HCT116 (cell line): ENCODE measurements at regions of chr1 and their contacts with region 1.

Region 1: GRCh38 chr1:147591261-147591891 is 50.1 kb downstream of the BCL9 start:
- DNase-seq: no peak
- ATAC-seq: no peak
- H3K4me3 ChIP-seq: no peak overlapping the region
- H3K27ac ChIP-seq: no peak overlapping the region
- H3K4me1 ChIP-seq: no peaks in the 10 kb centered on the region
- H3K27me3 ChIP-seq: no peaks in the 10 kb centered on the region; the same call in 1 of the 2 replicates
- CTCF ChIP-seq: no peak
- POLR2A ChIP-seq: no peak
- RAD21 ChIP-seq: no peak

Region 2: DNA sequence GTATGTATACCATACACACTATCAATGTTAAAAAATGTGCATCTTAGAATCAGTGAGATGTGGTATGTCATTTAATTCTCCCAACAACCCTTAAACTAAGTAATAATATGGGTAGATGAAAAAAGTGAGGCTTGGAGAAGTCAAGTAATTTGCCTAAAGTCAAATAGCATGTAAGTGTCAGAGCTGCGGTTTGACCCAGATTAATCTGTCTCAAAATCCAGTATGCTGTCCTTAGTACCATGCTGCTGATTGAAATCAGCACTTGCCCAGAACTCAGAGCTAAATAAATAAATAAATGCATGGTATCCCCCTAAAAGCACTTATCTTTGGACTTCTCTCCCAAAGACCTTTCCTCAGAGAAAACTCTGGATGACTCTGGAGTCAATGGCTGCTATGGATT is 33.3 kb before region 1 on chr1:
- CTCF ChIA-PET with region 1: no interaction called
- POLR2A ChIA-PET with region 1: no interaction called
- RAD21 ChIA-PET with region 1: no interaction called
- intact Hi-C with region 1: loop called (anchors 5 kb)
- DNase-seq: no peak
- ATAC-seq: no peak
- H3K4me3 ChIP-seq: no peak overlapping the region
- H3K27ac ChIP-seq: no peak overlapping the region
- H3K4me1 ChIP-seq: no peaks in the 10 kb centered on the region
- H3K27me3 ChIP-seq: no peaks in the 10 kb centered on the region
- CTCF ChIP-seq: no peak
- POLR2A ChIP-seq: no peak
- RAD21 ChIP-seq: no peak